Adrenal gland (tissue), 19 donors: ENCODE measurements at regions of chr16 and their contacts with region 1.

Region 1: DNA sequence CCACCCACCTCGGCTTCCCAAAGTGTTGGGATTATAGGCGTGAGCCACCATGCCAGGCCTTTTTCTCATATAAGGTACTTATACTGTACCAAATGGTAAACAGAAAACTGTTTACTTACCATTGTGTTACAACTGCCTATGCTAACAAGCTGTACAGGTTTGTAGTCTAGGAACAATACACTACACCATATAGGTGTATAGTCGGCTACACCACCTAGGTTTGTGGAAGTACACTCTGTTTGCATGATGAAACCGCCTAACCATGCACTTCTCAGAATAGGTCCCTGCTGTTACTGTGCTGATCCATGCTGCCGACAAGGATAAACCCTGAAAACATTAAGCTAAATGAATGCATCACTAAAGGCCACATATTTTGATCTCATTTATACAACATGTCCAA is 18.9 kb downstream of the DNAJA2 start:
- DNase-seq: no peak
- H3K4me3 ChIP-seq: no peak overlapping the region
- H3K27ac ChIP-seq: no peak overlapping the region
- H3K4me1 ChIP-seq: no peaks in the 10 kb centered on the region
- H3K27me3 ChIP-seq: no peaks in the 10 kb centered on the region
- CTCF ChIP-seq: no peak
- POLR2A ChIP-seq: no peak

Region 2: DNA sequence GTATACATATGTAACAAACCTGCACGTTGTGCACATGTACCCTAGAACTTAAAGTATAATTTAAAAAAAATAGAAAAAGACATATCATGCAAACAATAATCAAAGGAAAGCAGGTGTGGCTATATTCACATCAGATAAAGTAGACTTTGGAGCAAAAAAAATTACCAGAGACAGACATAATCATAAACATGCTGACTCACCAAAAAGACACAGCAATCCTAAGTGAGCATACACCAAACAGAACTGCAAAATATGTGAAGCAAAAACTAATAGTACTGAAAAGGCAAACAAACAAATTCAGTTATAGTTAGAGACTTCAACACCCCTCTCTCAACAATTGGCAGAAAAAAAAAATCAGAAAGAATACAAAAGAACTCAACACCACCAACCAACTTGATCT is 363.3 kb before region 1 on chr16:
- intact Hi-C with region 1: no loop called
- DNase-seq: no peak
- H3K4me3 ChIP-seq: no peak overlapping the region
- H3K27ac ChIP-seq: no peak overlapping the region
- H3K4me1 ChIP-seq: no peaks in the 10 kb centered on the region
- H3K27me3 ChIP-seq: no peaks in the 10 kb centered on the region
- CTCF ChIP-seq: no peak
- POLR2A ChIP-seq: no peak

Region 3: GRCh38 chr16:46787909-46788308 is 166.7 kb before region 1 on chr16:
- intact Hi-C with region 1: no loop called
- DNase-seq: no peak
- H3K4me3 ChIP-seq: no peak overlapping the region
- H3K27ac ChIP-seq: no peak overlapping the region
- H3K4me1 ChIP-seq: no peaks in the 10 kb centered on the region
- H3K27me3 ChIP-seq: no peaks in the 10 kb centered on the region
- CTCF ChIP-seq: no peak
- POLR2A ChIP-seq: no peak

Region 4: GRCh38 chr16:46853713-46854443 is 100.7 kb before region 1 on chr16:
- intact Hi-C with region 1: no loop called
- DNase-seq: peak; percentile 75 to 92 (median 87)
- H3K4me3 ChIP-seq: no peak overlapping the region
- H3K27ac ChIP-seq: no peak overlapping the region
- H3K4me1 ChIP-seq: no peaks in the 10 kb centered on the region
- H3K27me3 ChIP-seq: no peaks in the 10 kb centered on the region
- CTCF ChIP-seq: peak; percentile 58 to 91 (median 86)
- POLR2A ChIP-seq: no peak

Region 5: DNA sequence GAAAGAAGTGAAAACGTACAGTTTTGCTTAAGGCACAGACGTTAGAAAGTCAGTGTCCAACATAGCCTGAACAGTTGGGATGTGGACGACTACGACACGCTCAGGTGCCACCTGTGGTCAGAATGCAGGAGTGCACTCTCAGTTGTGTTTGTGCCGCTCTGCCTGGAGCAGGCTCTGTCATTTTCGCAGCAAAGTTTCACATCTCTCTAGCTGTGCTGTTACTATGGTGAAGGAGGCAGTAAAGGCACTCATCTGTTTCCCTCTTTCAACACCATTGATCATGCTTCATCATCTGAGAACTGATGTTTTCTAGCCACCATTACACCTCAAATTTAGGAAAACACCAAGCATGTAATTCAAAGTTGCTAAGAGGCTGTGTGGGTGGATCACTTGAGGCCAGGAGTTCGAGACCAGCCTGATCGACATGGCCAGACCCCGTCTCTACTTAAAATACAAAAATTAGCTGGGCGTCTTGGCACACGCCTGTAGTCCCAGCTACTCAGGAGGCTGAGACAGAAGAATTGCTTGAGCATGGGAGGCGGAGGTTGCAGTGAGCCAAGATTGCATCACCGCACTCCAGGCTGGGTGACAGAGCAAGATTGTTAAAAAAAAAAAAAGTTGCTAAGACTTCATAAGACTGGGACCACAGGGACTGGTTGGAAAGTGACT is 63.8 kb after region 1 on chr16:
- intact Hi-C with region 1: loop called in 1 of 2 experiments (anchors 5 kb)
- DNase-seq: peak; percentile 38 to 80 (median 63)
- H3K4me3 ChIP-seq: no peak overlapping the region
- H3K27ac ChIP-seq: no peak overlapping the region
- H3K4me1 ChIP-seq: no peaks in the 10 kb centered on the region
- H3K27me3 ChIP-seq: no peaks in the 10 kb centered on the region
- CTCF ChIP-seq: peak in 5 of 6 experiments; percentile 46 to 59 (median 56)
- POLR2A ChIP-seq: no peak

Region 6: GRCh38 chr16:47045023-47045422 is 90.5 kb after region 1 on chr16:
- intact Hi-C with region 1: no loop called
- DNase-seq: no peak
- H3K4me3 ChIP-seq: no peak overlapping the region
- H3K27ac ChIP-seq: no peak overlapping the region
- H3K4me1 ChIP-seq: peaks cover 0 to 8% of the 10 kb centered on the region in 2 donors
- H3K27me3 ChIP-seq: no peaks in the 10 kb centered on the region
- CTCF ChIP-seq: no peak
- POLR2A ChIP-seq: no peak